A673 (cell line): ENCODE measurements at regions of chr17 and their contacts with region 1.

Region 1: DNA sequence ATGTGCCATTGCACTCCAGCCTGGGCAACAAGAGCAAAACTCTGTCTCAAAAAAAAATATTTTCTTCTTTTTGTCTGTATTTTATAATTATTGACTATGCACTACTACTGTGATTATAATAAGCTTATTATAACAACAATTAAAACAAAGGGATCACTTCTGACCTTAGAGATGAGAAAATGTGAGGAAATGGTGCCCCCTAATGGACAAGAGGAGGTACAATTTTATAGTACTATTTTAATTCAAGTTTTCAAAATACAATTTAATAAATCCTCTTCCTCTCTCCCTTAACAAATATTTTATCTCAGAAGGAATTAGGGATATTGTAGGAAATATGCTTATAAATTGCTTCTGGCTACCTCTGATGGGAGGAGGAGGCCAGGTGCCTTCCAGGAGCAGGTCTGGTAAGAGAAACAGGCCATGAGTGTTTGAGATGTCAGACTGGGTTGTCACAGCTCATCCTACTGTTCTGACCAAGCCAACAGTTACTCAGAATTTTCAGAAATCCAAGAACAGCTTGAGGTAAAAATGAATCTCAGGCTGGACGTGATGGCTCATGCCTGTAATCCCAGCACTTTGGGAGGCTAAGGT is 14.0 kb downstream of the VPS53 start:
- DNase-seq: peak; percentile 27
- H3K4me3 ChIP-seq: no peak overlapping the region
- H3K27ac ChIP-seq: no peak overlapping the region
- H3K4me1 ChIP-seq: no peaks in the 10 kb centered on the region
- H3K27me3 ChIP-seq: no peaks in the 10 kb centered on the region
- CTCF ChIP-seq: peak; percentile 79

Region 2: DNA sequence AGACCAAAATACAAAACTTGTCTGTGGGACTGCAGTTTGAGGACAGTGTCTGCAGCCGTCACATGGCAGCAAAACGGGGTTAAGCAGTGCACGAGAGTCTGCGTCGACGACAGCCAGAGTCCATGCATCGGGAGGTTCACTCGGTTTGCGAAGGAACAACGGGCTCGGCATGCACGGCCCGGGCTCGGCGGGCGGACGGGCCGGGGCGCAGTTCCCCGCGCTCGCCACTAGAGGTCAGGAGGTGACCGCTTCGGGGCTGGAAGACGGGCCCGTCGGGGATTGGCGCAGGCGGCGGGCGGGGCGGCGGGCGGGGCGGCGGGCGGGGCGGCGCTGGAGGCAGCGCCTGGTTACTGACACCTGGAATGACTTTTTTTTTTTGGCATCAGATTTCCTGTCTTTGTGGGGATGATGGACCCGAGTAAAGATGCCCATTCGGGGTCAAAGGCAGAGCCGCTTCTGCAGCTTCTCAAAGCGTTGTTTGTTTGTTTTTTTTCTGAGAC is 556.8 kb before region 1 on chr17:
- CTCF ChIA-PET with region 1: interaction called, 3 read pairs
- POLR2A ChIA-PET with region 1: no interaction called
- intact Hi-C with region 1: loop called (anchors 5 kb)
- DNase-seq: peak; percentile 81
- H3K4me3 ChIP-seq: no peak overlapping the region
- H3K27ac ChIP-seq: no peak overlapping the region
- H3K4me1 ChIP-seq: no peaks in the 10 kb centered on the region
- H3K27me3 ChIP-seq: no peaks in the 10 kb centered on the region
- CTCF ChIP-seq: peak; percentile 80

Region 3: DNA sequence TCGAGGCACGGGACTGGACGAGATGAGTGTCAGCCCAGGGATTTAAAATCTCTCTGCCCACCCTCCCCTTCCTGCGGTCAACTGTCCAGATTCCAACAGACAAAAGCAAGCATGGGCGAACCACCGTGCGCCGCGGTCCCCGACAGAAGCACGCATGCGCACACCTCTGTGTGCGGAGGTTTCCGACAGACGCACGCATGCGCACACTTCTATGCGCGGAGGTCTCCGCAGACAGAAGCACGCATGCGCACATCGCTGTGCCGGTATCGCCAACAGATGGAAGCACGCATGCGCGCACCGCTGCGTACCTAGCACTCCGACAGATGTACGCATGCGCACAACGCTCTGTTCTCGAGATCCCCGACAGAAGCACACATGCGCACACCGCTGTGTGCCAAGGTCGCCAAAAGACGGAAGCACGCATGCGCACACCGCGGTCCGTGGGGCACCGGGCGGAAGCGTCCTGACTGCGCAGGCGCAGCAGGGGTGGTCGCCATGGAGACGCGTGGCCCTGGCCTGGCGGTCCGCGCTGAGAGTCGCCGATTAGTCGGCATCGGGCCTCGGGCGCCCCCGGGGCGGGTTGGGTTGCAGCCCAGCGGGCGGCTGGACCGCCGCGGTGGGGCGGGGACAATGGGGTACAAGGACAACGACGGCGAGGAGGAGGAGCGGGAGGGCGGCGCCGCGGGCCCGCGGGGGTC is 290.6 kb before region 1 on chr17:
- CTCF ChIA-PET with region 1: interaction called, 28 read pairs
- POLR2A ChIA-PET with region 1: no interaction called
- intact Hi-C with region 1: loop called (anchors 1 kb)
- DNase-seq: peak; percentile 98
- H3K4me3 ChIP-seq: peak overlapping the region; percentile 84
- H3K27ac ChIP-seq: peak overlapping the region; percentile 93
- H3K4me1 ChIP-seq: peaks cover 16% of the 10 kb centered on the region
- H3K27me3 ChIP-seq: no peaks in the 10 kb centered on the region
- CTCF ChIP-seq: no peak

Region 4: DNA sequence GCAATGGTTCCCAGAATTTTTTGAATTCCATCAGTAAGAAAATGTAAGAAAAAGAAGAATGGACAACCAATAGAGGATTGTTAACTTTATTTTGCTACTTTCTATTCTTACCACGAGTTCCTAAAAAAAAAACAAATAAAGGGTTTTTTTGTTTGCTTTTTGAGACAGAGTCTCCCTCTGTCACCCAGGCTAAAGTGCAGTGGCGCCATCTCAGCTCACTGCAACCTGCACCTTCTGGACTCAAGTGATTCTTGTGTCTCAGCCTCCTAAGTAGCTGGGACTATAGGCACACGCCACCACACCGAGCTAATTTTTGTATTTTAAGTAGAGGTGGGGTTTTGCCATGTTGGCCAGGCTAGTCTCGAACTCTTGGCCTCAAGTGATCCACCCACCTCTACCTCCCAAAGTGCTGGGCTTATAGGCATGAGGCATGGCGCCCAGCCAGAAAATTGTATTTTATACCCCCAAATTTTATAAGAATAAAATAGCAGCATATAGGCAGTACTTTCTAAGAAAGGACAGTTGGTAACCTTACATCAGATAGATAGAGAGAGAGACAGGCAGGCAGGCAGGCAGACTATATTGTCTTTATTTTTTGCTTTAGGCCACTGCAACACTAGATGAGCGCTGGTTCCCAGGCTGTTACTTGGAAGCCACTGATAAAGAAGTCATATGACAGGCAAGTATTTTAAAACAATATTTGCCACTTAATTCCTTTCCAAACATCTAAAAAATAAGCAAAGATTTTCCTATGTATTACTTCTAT is 113.5 kb before region 1 on chr17:
- CTCF ChIA-PET with region 1: no interaction called
- POLR2A ChIA-PET with region 1: no interaction called
- intact Hi-C with region 1: no loop called
- DNase-seq: no peak
- H3K4me3 ChIP-seq: no peak overlapping the region
- H3K27ac ChIP-seq: no peak overlapping the region
- H3K4me1 ChIP-seq: no peaks in the 10 kb centered on the region
- H3K27me3 ChIP-seq: no peaks in the 10 kb centered on the region
- CTCF ChIP-seq: no peak